Common myeloid progenitor, CD34-positive (primary cell): ENCODE measurements at regions of chr3 and their contacts with region 1.

Region 1: DNA sequence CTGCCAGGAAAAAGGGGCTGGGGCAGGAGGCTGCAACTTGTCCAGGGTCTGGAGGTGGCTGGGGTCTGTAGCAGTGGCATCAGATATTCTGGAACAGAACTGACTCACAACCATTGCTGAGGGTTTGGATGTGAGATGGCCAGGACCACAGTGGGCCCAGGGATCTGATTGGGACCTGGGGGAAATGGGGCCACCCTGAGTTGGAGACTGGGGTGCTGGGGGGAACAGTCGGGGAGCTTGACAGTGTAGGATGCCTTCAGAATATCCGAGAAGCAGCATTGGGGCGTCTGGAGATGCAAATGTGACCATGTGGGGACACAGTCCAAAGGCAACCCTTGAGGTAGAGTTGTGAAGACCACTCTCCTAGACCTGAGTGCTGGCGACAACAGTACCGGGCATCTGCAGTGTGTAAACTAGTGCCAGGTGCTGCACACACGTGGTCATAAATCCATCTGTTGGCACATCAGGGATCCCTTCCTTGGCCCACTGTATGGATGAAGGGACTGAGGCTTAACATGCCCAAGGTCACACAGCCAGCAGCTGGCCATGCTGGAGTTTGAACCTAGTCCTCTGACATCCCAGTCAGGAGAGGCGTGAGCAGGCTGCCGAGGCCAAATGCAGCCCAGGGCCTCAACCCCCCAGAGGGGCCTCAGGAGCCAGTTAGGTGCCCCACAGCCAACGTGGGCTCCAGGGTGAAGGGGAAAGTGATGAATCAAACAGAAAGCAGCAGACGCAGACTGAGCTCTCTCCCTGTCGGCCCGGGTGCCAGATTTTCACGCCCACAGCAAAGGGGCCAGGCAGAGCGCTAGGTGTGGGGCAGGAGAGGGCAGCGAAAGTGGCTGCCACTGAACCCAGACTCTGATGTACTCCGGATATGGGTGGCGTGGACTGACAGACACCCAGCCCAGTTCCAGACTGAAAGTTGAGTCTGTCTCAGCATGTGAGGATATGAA is 18.8 kb downstream of the HEMK1 start:
- DNase-seq: peak in 2 of 3 donors; percentile 30 to 46
- H3K4me3 ChIP-seq: no peak overlapping the region
- H3K27ac ChIP-seq: no peak overlapping the region
- H3K4me1 ChIP-seq: peaks cover 3 to 49% (median 45%) of the 10 kb centered on the region in 4 experiments
- H3K27me3 ChIP-seq: no peaks in the 10 kb centered on the region

Region 2: DNA sequence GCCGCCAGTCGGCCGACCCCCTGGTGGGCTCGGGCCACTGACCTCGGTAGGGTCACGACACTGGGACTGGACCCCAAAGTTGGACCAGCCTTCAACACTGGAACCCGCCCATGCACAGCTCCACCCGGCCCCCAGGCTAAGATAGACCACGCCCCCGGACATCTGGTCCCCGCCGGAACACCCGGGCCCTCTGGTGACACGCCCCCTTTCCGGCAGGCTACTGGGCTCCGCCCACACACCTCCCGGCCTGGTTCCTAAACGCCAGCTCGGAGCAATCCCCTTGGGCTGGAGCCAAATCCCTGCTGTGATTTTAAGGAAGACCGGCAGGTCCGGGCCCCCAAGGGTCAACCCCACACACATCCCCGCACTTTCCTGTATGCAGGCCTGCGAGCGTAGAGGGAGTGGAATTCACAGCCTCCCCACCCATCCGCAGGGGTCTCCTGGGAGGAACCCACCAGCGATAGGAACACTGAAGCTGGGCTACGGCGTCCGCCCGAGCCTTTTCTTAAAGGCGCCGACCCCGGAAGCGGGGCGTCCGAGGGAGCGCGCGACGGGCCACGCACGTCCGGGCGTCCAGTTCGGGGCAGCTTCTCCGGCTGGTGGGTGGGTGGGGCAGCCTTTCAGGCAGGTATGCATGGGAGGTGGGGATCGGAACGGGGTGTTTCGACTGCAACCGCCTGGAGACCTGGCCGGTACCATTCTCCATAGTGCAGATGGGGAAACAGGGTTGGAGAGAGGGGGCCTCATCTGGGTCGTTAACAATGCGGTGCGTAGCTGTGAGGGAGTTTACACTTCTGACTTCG is 18.9 kb before region 1 on chr3 and contains the start of gene HEMK1:
- CTCF ChIA-PET with region 1: interaction called, 204 read pairs
- POLR2A ChIA-PET with region 1: interaction called, 5 read pairs
- DNase-seq: peak; percentile 92 to 93 (median 93)
- H3K4me3 ChIP-seq: peak within 1 kb of the TSS; percentile 69 to 98 (median 91)
- H3K27ac ChIP-seq: peak within 1 kb of the TSS; percentile 40 to 80
- H3K4me1 ChIP-seq: peaks cover 7 to 57% (median 47%) of the 10 kb centered on the region in 4 experiments
- H3K27me3 ChIP-seq: peaks cover 0 to 4% (median 0%) of the 10 kb centered on the region in 5 experiments

Region 3: DNA sequence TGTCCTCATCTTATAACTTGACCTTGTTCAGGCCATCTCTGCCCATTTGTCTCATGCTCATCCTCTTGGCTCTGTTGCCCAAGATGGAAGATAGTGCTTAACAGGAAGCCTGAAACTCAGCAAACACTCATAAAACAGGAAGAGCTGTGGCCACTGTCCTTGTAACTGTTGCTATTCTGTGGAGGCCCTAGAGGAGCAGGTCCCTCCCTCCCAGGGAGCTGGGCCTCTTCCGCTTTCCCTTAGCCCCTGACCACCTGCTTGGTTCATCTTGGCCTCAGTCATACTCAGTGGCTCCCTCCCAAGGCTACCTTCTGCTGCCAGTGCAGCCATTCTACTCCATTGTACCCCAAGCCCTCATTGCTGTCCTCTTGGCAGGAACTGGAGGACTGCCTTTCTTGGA is 32.3 kb after region 1 on chr3:
- CTCF ChIA-PET with region 1: interaction called, 449 read pairs
- POLR2A ChIA-PET with region 1: interaction called, 4 read pairs
- DNase-seq: peak in 2 of 3 donors; percentile 87 to 91
- H3K4me3 ChIP-seq: peak overlapping the region in 5 of 7 experiments; percentile 20 to 65 (median 63)
- H3K27ac ChIP-seq: peak overlapping the region; percentile 65 to 75
- H3K4me1 ChIP-seq: peaks cover 41 to 91% (median 87%) of the 10 kb centered on the region in 4 experiments
- H3K27me3 ChIP-seq: no peaks in the 10 kb centered on the region

Region 4: DNA sequence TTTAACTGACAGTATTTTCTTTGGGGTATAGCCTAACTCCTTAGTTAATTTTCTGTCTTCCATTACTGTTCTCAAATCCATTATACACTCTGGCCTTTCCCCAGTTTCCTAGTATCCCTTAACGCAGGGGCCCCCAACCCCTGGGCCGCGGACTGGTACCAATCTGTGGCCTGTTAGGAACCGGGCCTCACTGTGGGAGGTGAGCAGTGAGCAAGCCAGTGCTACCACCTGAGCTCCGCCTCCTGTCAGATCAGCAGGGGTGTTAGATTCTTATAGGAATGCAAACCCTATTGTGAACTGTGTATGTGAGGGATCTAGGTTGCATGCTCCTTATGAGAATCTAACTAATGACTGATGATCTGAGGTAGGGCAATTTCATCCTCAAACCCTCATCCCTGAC is 161.7 kb after region 1 on chr3:
- CTCF ChIA-PET with region 1: no interaction called
- POLR2A ChIA-PET with region 1: no interaction called
- DNase-seq: no peak
- H3K4me3 ChIP-seq: no peak overlapping the region
- H3K27ac ChIP-seq: no peak overlapping the region
- H3K4me1 ChIP-seq: no peaks in the 10 kb centered on the region
- H3K27me3 ChIP-seq: no peaks in the 10 kb centered on the region